Posterior vena cava (tissue), 2 donors: ENCODE measurements at regions of chr7 and their contacts with region 1.

Region 1: GRCh38 chr7:129468087-129468486 is 33.9 kb downstream of the STRIP2 start:
- DNase-seq: no peak

Region 2: GRCh38 chr7:129218514-129219062 is 249.5 kb before region 1 on chr7:
- intact Hi-C with region 1: loop called (anchors 10 kb)
- DNase-seq: peak; percentile 92

Region 3: GRCh38 chr7:129367700-129368388 is 100.2 kb before region 1 on chr7:
- intact Hi-C with region 1: loop called (anchors 5 to 10 kb)
- DNase-seq: peak; percentile 92

Region 4: GRCh38 chr7:129376076-129376777 is 91.9 kb before region 1 on chr7:
- intact Hi-C with region 1: loop called in 1 of 2 experiments (anchors 10 kb)
- DNase-seq: no peak